Caco-2 (cell line): ENCODE measurements at regions of chr4 and their contacts with region 1.

Region 1: GRCh38 chr4:63717384-63717783 is 691.9 kb downstream of the TECRL start:
- DNase-seq: peak in 1 of 2 experiments; percentile 20
- H3K4me3 ChIP-seq: no peak overlapping the region
- H3K4me3 Mint-ChIP-seq: no peak overlapping the region
- H3K27ac Mint-ChIP-seq: no peak overlapping the region
- H3K4me1 ChIP-seq: no peaks in the 10 kb centered on the region
- H3K4me1 Mint-ChIP-seq: no peaks in the 10 kb centered on the region
- H3K27me3 ChIP-seq: no peaks in the 10 kb centered on the region
- H3K27me3 Mint-ChIP-seq: peaks cover 2% of the 10 kb centered on the region
- CTCF ChIP-seq: peak; percentile 31 to 44

Region 2: GRCh38 chr4:63296773-63297172 is 420.6 kb before region 1 on chr4:
- CTCF ChIA-PET with region 1: no interaction called
- POLR2A ChIA-PET with region 1: no interaction called
- intact Hi-C with region 1: loop called (anchors 1 kb)
- DNase-seq: peak in 1 of 2 experiments; percentile 5
- H3K4me3 ChIP-seq: no peak overlapping the region
- H3K4me3 Mint-ChIP-seq: no peak overlapping the region
- H3K27ac Mint-ChIP-seq: no peak overlapping the region
- H3K4me1 ChIP-seq: no peaks in the 10 kb centered on the region
- H3K4me1 Mint-ChIP-seq: no peaks in the 10 kb centered on the region
- H3K27me3 ChIP-seq: no peaks in the 10 kb centered on the region
- H3K27me3 Mint-ChIP-seq: no peaks in the 10 kb centered on the region
- CTCF ChIP-seq: peak in 1 of 2 experiments; percentile 18

Region 3: GRCh38 chr4:63528256-63528991 is 189.0 kb before region 1 on chr4:
- CTCF ChIA-PET with region 1: no interaction called
- POLR2A ChIA-PET with region 1: no interaction called
- intact Hi-C with region 1: loop called (anchors 1 kb)
- DNase-seq: no peak
- H3K4me3 ChIP-seq: no peak overlapping the region
- H3K4me3 Mint-ChIP-seq: no peak overlapping the region
- H3K27ac Mint-ChIP-seq: no peak overlapping the region
- H3K4me1 ChIP-seq: no peaks in the 10 kb centered on the region
- H3K4me1 Mint-ChIP-seq: no peaks in the 10 kb centered on the region
- H3K27me3 ChIP-seq: no peaks in the 10 kb centered on the region
- H3K27me3 Mint-ChIP-seq: no peaks in the 10 kb centered on the region
- CTCF ChIP-seq: no peak

Region 4: DNA sequence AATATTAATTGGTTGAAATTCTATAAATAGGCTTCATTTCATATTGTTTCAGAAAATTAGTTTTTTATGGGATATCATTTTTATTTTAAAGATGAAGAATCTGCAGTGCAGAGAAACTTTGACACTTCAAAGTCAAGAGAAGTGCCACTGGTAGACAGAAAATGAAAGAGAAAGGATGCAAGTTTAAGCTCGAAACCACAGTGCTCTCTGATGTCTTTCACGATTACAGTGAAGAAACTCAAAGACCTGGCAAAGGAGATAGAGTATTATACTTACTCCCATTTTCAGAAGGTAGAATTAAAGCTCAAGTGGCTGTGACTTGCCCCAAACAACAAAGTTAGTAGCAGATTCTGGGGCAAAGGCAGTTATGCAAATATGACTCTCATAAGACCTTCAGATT is 53.5 kb before region 1 on chr4:
- CTCF ChIA-PET with region 1: no interaction called
- POLR2A ChIA-PET with region 1: no interaction called
- intact Hi-C with region 1: no loop called
- DNase-seq: no peak
- H3K4me3 ChIP-seq: no peak overlapping the region
- H3K4me3 Mint-ChIP-seq: no peak overlapping the region
- H3K27ac Mint-ChIP-seq: no peak overlapping the region
- H3K4me1 ChIP-seq: no peaks in the 10 kb centered on the region
- H3K4me1 Mint-ChIP-seq: no peaks in the 10 kb centered on the region
- H3K27me3 ChIP-seq: no peaks in the 10 kb centered on the region
- H3K27me3 Mint-ChIP-seq: no peaks in the 10 kb centered on the region
- CTCF ChIP-seq: no peak